HAP-1 (cell line): ENCODE measurements at regions of chr4 and their contacts with region 1.

Region 1: GRCh38 chr4:159175085-159175988 is 72.5 kb downstream of the RAPGEF2 start:
- DNase-seq: peak; percentile 79
- H3K4me3 ChIP-seq: no peak overlapping the region
- H3K4me1 ChIP-seq: peaks cover 11% of the 10 kb centered on the region
- H3K27me3 ChIP-seq: no peaks in the 10 kb centered on the region

Region 2: GRCh38 chr4:158845311-158846041 is 329.9 kb before region 1 on chr4:
- in situ Hi-C with region 1: loop called (anchors 10 kb)
- DNase-seq: peak; percentile 67 to 77
- H3K4me3 ChIP-seq: no peak overlapping the region
- H3K4me1 ChIP-seq: peaks cover 17% of the 10 kb centered on the region
- H3K27me3 ChIP-seq: no peaks in the 10 kb centered on the region

Region 3: GRCh38 chr4:158929939-158930638 is 245.2 kb before region 1 on chr4:
- in situ Hi-C with region 1: no loop called
- DNase-seq: no peak
- H3K4me3 ChIP-seq: no peak overlapping the region
- H3K4me1 ChIP-seq: no peaks in the 10 kb centered on the region
- H3K27me3 ChIP-seq: no peaks in the 10 kb centered on the region

Region 4: GRCh38 chr4:159273141-159273438 is 97.8 kb after region 1 on chr4:
- in situ Hi-C with region 1: no loop called
- DNase-seq: no peak
- H3K4me3 ChIP-seq: no peak overlapping the region
- H3K4me1 ChIP-seq: peaks cover 11% of the 10 kb centered on the region; the same call in 1 of the 2 replicates
- H3K27me3 ChIP-seq: no peaks in the 10 kb centered on the region